ENCODE measurements at regions of chr12 and their contacts with region 1.

Region 1: DNA sequence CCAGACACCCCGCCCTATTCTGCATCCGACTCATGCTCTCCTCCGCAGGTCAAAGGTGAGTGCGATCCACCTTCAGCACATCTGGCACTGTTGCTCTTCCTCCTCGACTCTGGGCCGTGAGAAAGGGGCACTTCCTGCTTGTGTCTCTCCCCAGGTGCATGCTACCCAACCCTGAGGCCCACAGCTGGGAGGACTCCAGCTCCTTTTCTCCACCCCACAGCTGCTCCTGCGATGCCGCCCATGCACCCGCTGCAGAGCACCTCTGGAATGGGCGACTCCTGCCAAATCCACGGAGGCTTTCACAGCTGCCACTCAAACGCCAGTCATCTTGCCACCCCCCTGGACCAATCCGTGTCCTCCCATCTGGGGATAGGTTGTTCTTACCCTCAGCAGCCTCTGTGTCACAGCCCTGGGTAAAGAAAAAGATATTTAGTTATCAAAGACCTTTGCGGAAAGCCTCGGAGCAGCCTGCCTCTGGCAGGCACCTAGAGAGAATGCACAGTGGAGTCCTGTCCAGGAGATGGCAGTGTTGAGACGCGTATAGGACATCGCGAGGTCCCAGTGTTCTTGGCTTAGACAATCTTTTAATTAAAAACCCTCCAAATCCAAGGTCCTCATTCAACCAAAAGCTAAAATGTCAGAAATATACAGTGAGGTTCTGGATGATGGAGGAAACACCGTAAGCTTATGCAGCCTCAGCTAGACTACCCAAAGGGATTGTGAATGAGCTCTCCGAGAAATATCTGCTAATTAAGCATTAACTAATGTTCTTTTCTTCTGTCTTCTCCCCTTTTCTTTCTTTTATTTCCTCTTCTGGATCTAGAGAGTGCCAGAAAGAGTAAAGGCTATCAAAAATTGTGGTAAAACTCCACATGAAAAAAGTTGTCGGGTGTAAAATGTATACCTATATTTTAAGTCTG is 54.3 kb downstream of the MYRFL start:
- DNase-seq: peak; percentile 85
- H3K4me3 ChIP-seq: peak overlapping the region; percentile 25
- H3K27ac ChIP-seq: no peak overlapping the region
- H3K4me1 ChIP-seq: no peaks in the 10 kb centered on the region
- H3K27me3 ChIP-seq: no peaks in the 10 kb centered on the region
- CTCF ChIP-seq: peak; percentile 95

Region 2: DNA sequence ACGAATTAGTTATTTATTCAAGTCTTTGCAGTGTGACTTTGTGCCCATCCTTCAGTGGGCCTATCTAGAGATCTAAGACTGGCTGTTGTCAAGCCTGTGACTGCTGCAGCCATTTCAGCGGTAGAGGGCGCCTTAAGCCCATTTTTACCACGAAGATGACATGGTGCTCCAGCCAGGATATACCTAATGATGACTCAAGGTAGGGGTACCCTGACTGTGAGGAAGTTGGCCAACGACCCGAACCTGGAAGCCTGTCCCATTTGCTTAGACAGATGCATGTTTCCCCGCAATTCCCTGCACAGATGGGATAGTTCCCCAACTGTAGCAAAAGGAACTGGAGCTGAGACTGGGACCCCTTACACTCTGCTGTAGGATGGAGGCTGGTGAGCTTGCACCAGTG is 99.4 kb before region 1 on chr12:
- CTCF ChIA-PET with region 1: interaction called, 4 read pairs
- POLR2A ChIA-PET with region 1: no interaction called
- intact Hi-C with region 1: loop called (anchors 5 kb)
- DNase-seq: peak; percentile 76
- H3K4me3 ChIP-seq: no peak overlapping the region
- H3K27ac ChIP-seq: no peak overlapping the region
- H3K4me1 ChIP-seq: no peaks in the 10 kb centered on the region
- H3K27me3 ChIP-seq: no peaks in the 10 kb centered on the region
- CTCF ChIP-seq: peak; percentile 87

Region 3: DNA sequence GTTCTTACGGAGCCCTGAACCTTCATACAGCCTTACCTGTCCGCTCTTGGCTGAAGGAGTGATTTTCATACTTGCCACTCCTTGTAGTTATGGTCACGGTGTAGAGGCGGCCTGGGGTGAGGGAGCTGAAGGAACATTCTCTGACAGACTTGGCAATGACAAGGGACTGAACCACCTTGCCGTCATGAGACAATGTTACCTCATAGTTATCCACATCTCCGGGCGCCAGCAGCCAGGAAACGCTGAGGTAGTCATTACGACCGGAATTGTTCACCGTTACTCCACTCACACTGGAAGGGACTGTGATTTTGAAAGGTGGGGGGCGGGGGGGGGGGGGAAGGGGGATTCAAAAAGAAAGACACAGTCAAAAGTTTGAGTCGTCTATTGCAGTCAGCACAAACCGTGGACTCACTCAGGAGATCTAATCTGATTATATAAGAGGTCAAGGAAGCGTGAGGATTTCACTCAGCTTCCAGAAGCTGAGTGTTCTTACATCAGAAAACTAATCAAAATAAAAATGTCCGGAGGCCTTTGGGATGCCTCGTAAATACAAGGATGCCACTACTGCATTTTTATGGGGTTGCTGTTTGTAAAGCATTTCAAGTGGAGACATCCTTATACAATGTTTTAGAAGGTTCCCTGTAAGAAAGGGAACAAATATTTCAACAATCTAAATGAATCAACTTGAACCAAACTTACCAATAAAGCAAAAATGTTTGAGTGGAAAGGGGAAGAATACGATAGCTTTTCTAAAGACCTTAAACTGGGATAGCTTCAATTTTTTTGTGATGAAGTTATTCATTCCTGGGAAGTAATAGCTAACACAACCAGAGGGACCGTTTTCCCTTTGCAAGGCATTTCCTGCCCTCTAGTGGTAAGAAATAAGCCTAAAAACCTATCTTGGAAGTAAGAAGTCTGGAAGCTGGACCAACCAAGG is 697.3 kb after region 1 on chr12:
- CTCF ChIA-PET with region 1: interaction called, 10 read pairs
- POLR2A ChIA-PET with region 1: interaction called, 3 read pairs
- intact Hi-C with region 1: loop called (anchors 1 kb)
- DNase-seq: peak; percentile 86
- H3K4me3 ChIP-seq: no peak overlapping the region
- H3K27ac ChIP-seq: no peak overlapping the region
- H3K4me1 ChIP-seq: peaks cover 6% of the 10 kb centered on the region
- H3K27me3 ChIP-seq: peaks cover 3% of the 10 kb centered on the region
- CTCF ChIP-seq: peak; percentile 79

Region 4: GRCh38 chr12:70719672-70720420 is 840.5 kb after region 1 on chr12:
- CTCF ChIA-PET with region 1: interaction called, 5 read pairs
- POLR2A ChIA-PET with region 1: no interaction called
- intact Hi-C with region 1: loop called (anchors 1 kb)
- DNase-seq: peak; percentile 58
- H3K4me3 ChIP-seq: no peak overlapping the region
- H3K27ac ChIP-seq: no peak overlapping the region
- H3K4me1 ChIP-seq: peaks cover 11% of the 10 kb centered on the region
- H3K27me3 ChIP-seq: no peaks in the 10 kb centered on the region
- CTCF ChIP-seq: peak; percentile 97

Measured in A673 (cell line).